RWPE1 (cell line): ENCODE measurements at regions of chr19 and their contacts with region 1.

Region 1: DNA sequence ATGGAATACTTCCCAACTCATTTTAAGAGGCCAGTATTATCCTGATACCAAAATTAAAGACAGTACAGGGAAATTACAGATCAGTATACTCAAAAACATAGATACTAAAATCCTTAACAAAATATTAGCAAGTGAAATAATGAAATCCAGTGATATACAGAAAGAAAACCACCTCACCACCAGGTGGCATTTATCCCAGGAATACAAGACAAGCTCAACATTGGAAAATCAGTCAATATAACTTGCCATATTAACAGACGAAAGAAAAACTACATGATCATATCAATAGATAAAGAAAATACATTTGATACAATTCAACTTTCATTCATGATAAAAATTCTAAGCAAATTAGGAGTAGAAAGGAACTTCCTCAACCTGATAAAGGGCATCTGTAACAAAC is 6.7 kb upstream of the GNA15 start:
- DNase-seq: no peak
- H3K27ac ChIP-seq: peak overlapping the region; percentile 43; the same call in 1 of the 2 replicates
- CTCF ChIP-seq: peak; percentile 78

Region 2: GRCh38 chr19:3029065-3029923 is 99.8 kb before region 1 on chr19 and contains the start of gene TLE2:
- CTCF ChIA-PET with region 1: no interaction called
- POLR2A ChIA-PET with region 1: no interaction called
- DNase-seq: no peak
- H3K27ac ChIP-seq: peak within 1 kb of the TSS; percentile 37; the same call in 1 of the 2 replicates
- CTCF ChIP-seq: no peak

Region 3: GRCh38 chr19:3108775-3109174 is 20.3 kb before region 1 on chr19:
- CTCF ChIA-PET with region 1: interaction called, 11 read pairs
- POLR2A ChIA-PET with region 1: no interaction called
- DNase-seq: no peak
- H3K27ac ChIP-seq: peak overlapping the region; percentile 56
- CTCF ChIP-seq: peak; percentile 90

Region 4: GRCh38 chr19:3163230-3163886 is 34.2 kb after region 1 on chr19:
- CTCF ChIA-PET with region 1: interaction called, 13 read pairs
- POLR2A ChIA-PET with region 1: no interaction called
- DNase-seq: peak; percentile 79
- H3K27ac ChIP-seq: peak overlapping the region; percentile 60
- CTCF ChIP-seq: peak; percentile 94